A673 (cell line): ENCODE measurements at regions of chr2 and their contacts with region 1.

Region 1: DNA sequence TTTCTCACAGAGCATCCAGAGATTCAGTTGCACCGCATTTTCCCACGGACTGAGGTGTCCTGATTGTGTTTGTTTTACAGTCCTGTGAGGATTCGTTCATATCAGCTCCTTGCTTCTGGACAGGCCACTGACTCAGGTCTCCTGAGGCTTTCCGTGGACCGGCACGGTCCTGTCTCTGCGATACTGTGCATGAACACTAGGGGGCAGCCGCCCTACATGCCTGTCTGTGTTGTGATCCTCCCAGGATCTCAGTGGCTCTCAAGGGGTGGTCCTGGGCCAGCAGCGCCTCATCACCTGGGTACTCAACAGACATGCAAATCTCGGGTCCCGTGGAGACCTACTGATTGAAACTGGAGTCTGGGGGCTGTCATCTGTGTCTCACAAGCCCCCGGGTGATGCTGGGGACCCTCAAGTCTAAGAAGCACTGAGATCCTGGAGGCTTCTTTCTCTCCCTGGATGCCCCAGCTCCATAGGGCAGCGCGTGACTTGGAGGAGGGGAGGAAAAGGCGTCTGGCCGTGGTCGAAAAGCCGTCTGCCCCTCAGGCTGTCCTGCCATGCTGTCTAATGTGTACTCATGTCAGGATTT is 28.9 kb downstream of the IL1R2 start:
- DNase-seq: peak; percentile 71
- H3K4me3 ChIP-seq: no peak overlapping the region
- H3K27ac ChIP-seq: no peak overlapping the region
- H3K4me1 ChIP-seq: no peaks in the 10 kb centered on the region
- H3K27me3 ChIP-seq: no peaks in the 10 kb centered on the region
- CTCF ChIP-seq: peak; percentile 95

Region 2: DNA sequence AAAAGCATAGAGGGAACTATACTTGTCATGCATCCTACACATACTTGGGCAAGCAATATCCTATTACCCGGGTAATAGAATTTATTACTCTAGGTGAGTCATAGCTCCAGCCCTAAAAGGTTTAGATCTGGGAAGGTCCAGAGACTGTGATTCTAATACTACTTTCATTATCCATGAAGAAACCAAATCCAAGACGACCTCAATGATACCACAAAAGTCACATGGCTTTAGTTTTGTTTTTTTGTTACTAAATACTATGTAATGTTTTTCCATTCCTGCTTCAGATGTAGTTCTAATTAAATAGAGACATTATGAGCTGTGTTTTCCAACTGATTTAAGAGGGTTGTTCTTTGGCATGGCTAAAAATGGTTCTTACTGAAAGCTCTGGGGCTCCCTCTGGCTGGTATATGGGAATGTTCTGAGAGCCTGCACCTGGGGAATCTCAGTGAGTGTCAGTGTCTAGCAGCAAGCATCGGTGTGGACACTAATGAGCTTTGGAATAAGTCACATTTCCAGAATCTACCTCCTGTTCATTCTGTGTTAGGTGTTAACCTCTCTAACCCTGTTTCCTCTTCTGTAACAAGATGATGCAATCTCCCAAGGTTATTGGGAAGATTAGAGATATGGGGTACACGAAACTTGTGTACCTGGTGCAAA is 145.6 kb after region 1 on chr2:
- CTCF ChIA-PET with region 1: no interaction called
- POLR2A ChIA-PET with region 1: no interaction called
- intact Hi-C with region 1: loop called (anchors 5 kb)
- DNase-seq: peak; percentile 8
- H3K4me3 ChIP-seq: no peak overlapping the region
- H3K27ac ChIP-seq: no peak overlapping the region
- H3K4me1 ChIP-seq: no peaks in the 10 kb centered on the region
- H3K27me3 ChIP-seq: no peaks in the 10 kb centered on the region
- CTCF ChIP-seq: peak; percentile 43; the same call in 1 of the 2 replicates

Region 3: DNA sequence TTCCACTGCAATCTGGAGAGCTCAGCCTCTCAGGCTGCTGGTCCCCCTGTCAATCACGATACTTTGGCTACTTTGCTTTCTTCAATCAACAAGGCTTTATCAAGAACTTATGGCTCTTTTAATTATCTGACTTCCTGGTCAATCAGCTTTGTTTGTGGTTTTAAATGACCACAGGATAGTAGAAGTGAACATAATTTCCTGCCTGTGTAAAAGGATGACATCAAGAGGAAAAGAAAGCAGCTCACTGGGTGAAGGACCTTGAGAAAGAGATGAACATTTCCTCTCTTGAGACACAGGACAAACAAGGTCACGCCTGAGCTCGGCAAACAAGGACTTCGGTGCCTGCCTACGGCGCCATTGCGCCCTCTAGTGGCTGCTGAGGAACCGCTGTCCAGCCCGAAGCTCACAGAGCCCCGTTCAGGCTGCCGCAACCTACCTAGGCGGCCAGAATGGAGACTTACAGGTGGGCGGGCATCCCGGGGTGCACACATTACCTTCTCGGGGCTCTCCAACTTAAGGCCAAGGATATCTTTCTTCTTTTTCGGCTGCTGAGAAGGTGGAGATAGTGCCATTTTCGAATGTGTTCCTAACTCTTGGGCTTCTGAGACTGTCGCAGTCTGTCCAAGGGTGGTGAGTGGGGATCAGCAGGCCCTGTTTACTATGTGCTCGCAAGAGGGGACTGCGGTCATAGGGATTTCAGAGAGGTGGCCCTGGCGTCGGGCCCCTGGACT is 220.1 kb after region 1 on chr2:
- CTCF ChIA-PET with region 1: interaction called, 9 read pairs
- POLR2A ChIA-PET with region 1: no interaction called
- intact Hi-C with region 1: loop called (anchors 1 kb)
- DNase-seq: peak; percentile 73
- H3K4me3 ChIP-seq: no peak overlapping the region
- H3K27ac ChIP-seq: no peak overlapping the region
- H3K4me1 ChIP-seq: peaks cover 4% of the 10 kb centered on the region
- H3K27me3 ChIP-seq: peaks cover 26% of the 10 kb centered on the region
- CTCF ChIP-seq: peak; percentile 97

Region 4: GRCh38 chr2:102355526-102356380 is 335.1 kb after region 1 on chr2 and contains the start of gene IL18R1:
- CTCF ChIA-PET with region 1: no interaction called
- POLR2A ChIA-PET with region 1: no interaction called
- intact Hi-C with region 1: loop called (anchors 10 kb)
- DNase-seq: peak; percentile 56
- H3K4me3 ChIP-seq: peak within 1 kb of the TSS; percentile 47
- H3K27ac ChIP-seq: no peak within 1 kb of the TSS
- H3K4me1 ChIP-seq: no peaks in the 10 kb centered on the region
- H3K27me3 ChIP-seq: peaks cover 37% of the 10 kb centered on the region
- CTCF ChIP-seq: peak; percentile 64
- total RNA-seq, gene IL18R1: not detected in 2 replicates

Region 5: DNA sequence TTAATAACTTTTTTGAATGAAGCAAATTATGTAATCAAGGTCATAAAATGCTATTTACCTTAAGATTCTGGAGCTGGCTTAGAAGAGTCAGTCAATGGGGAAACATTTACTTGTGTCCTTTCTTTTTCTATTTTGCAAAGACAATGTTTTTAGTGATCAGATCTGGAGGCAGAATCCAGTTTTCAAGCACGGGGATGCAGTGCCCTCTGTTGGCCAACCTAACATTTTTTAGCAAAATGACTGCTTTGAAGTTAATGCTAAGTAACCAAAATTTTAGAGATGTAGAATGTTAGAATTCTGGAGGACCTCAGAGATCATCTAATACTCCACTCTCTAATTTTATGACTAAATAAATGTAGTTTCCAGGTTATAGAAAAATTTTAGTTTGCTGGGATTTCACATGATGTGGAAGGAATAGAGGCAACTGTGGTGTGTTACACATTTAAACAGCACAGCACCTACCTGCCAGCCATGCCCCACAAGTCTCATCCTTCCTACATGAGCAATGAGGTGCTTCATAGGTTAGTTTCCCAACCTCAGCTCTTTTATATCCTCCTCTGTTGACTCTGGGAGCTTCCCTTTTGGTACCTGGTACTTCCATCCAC is 428.8 kb after region 1 on chr2:
- CTCF ChIA-PET with region 1: interaction called, 3 read pairs
- POLR2A ChIA-PET with region 1: no interaction called
- intact Hi-C with region 1: loop called (anchors 5 kb)
- DNase-seq: peak; percentile 24
- H3K4me3 ChIP-seq: no peak overlapping the region
- H3K27ac ChIP-seq: no peak overlapping the region
- H3K4me1 ChIP-seq: no peaks in the 10 kb centered on the region
- H3K27me3 ChIP-seq: peaks cover 14% of the 10 kb centered on the region
- CTCF ChIP-seq: peak; percentile 72